Panc1 (cell line): ENCODE measurements at regions of chr22 and their contacts with region 1.

Region 1: DNA sequence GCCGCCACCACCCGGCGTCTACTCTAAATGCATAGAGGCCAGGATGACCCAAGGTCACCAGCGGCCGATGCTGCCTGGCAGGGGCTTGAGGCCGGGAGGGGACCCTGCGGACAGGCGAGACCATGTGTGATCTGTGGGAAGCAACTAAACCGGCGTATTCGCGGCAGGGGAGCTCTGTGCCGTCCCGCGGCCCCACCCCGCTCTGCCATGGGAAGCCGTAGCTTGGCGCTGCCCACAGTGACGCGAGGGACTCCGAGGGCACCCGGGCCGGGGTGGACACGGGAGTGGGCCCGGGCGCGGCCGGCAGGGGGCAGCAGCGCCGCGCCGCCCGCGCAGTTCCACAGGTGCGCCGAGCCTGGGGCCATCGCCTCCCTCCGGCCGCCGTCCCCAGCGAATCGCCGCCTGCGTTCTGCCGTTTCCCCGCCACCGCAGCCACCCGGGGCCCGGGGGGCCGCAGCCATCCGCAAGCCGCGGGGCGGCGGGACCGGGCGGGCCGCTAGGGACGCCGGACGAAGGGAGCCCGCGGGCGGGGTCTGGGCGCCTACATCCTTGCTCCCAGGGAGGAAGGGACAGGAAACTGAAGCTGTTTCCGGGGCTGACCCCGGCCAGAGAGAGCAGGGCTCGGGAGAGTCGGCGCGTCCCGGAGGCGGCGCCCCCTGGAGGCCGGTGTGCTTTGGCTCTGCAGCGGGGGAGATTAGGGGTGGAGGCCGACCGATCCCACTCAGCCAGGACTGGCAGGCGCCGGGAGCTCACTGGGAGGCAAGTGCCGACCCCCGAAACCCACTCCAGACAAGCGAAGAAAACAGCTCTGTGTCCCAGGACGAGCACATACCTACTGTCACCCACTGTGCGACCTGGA is 12.5 kb upstream of the HDHD5 start:
- DNase-seq: peak; percentile 47
- ATAC-seq: peak; percentile 99
- H3K4me3 ChIP-seq: peak overlapping the region; percentile 55 to 60
- H3K27ac ChIP-seq: peak overlapping the region; percentile 74
- H3K4me1 ChIP-seq: peaks cover 4% of the 10 kb centered on the region; the same call in 1 of the 2 replicates
- H3K27me3 ChIP-seq: no peaks in the 10 kb centered on the region
- CTCF ChIP-seq: peak; percentile 96

Region 2: GRCh38 chr22:17077255-17077654 is 94.3 kb before region 1 on chr22:
- CTCF ChIA-PET with region 1: no interaction called
- POLR2A ChIA-PET with region 1: no interaction called
- in situ Hi-C with region 1: no loop called
- intact Hi-C with region 1: loop called (anchors 2 kb)
- DNase-seq: no peak
- ATAC-seq: no peak
- H3K4me3 ChIP-seq: no peak overlapping the region
- H3K27ac ChIP-seq: no peak overlapping the region
- H3K4me1 ChIP-seq: no peaks in the 10 kb centered on the region
- H3K27me3 ChIP-seq: no peaks in the 10 kb centered on the region
- CTCF ChIP-seq: no peak

Region 3: GRCh38 chr22:17348461-17349113 is 177.0 kb after region 1 on chr22:
- CTCF ChIA-PET with region 1: no interaction called
- POLR2A ChIA-PET with region 1: no interaction called
- in situ Hi-C with region 1: no loop called
- intact Hi-C with region 1: no loop called
- DNase-seq: no peak
- ATAC-seq: no peak
- H3K4me3 ChIP-seq: no peak overlapping the region
- H3K27ac ChIP-seq: no peak overlapping the region
- H3K4me1 ChIP-seq: peaks cover 3% of the 10 kb centered on the region; the same call in 1 of the 2 replicates
- H3K27me3 ChIP-seq: no peaks in the 10 kb centered on the region
- CTCF ChIP-seq: no peak

Region 4: DNA sequence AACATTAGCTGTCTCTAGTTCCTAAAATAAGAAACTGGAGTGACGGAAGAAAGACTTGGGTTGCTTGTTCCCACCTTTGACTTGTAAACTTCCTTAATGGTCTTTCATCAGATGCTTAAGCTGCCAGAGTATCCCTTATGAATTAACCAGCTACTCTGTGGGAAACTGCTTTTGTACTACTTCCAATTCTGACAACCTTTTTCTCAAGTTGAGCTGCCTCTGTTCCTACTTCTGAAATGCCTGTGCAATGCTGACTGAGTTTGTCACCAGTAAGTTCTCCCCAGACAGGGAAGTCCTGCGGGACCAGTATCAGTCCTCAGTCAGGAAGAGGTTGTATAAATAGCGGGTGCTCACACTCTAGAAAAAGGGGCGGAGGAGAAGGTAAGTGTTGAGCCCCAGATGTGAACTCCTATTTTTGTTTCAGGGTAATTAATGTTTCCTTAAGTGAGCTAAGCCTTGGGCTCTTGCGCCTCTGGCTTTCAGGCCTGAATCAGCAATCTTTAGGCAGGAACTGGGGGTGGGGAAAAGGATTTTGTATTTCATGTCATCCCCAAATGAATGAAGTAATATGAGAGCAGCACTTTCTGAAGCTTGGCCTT is 264.9 kb after region 1 on chr22:
- CTCF ChIA-PET with region 1: no interaction called
- POLR2A ChIA-PET with region 1: no interaction called
- in situ Hi-C with region 1: no loop called
- intact Hi-C with region 1: no loop called
- DNase-seq: no peak
- ATAC-seq: no peak
- H3K4me3 ChIP-seq: no peak overlapping the region
- H3K27ac ChIP-seq: no peak overlapping the region
- H3K4me1 ChIP-seq: no peaks in the 10 kb centered on the region
- H3K27me3 ChIP-seq: no peaks in the 10 kb centered on the region
- CTCF ChIP-seq: no peak

Region 5: DNA sequence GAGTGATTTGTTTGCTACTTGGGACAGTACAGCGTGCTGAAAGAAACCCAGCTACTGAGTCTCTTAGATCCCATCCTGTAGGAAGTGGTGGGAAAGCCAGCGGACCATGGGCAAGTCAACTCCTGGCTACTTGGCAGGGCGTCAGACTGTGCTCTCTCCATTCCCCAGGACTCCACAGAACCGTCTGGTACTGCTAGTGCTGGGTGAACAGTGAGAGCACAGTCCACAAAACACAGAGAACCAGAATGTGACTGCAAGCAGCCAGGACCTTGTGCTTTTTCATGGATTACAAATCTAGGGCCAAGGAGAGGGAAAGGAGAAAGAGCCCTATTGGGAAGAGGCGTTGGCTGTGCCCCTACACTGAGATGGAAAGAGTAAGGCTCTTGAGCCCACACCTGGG is 592.5 kb after region 1 on chr22:
- CTCF ChIA-PET with region 1: interaction called, 14 read pairs
- POLR2A ChIA-PET with region 1: no interaction called
- in situ Hi-C with region 1: no loop called
- intact Hi-C with region 1: no loop called
- DNase-seq: no peak
- ATAC-seq: peak; percentile 25; the same call in 1 of the 2 replicates
- H3K4me3 ChIP-seq: no peak overlapping the region
- H3K27ac ChIP-seq: no peak overlapping the region
- H3K4me1 ChIP-seq: peaks cover 5% of the 10 kb centered on the region; the same call in 1 of the 2 replicates
- H3K27me3 ChIP-seq: no peaks in the 10 kb centered on the region
- CTCF ChIP-seq: no peak